ENCODE measurements at regions of chr9 and their contacts with region 1.

Region 1: DNA sequence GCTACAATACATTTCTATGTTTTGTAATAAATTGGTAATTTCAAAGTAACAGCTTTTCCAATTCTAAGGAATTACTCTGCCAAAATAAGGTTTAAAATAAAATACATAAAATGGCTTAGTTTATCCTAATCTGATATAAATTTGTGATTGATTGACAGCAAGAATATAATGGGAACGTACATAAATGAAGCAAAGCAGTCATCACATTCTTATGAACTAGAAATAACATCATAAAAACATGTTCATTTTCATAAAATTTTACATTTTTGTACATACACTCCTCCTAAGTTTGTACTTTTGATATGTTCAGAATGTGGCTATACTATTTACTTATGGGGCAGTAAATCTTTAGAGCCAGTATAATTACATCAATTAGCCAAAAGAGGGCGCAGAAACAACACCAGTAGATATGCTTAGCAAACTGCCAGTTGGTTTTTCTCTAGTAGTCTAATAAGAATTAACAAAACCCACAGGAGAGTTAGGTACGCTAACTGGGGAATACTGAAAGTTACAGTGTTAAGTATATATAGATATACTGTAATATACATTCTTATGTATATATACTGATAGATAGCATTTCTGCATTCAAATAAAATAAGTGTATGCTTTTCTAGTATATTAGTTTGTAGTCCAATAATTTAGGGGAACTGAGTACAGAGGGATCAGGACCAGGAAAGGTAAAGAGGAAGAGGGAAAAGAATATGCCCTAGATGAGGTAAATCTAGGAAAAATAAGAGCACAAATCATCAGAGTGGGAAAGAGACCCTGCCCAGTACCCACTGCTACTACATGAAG is 76.8 kb downstream of the ZDHHC21 start:
- DNase-seq: no peak
- ATAC-seq: no peak
- H3K4me3 ChIP-seq: no peak overlapping the region
- H3K27ac ChIP-seq: no peak overlapping the region
- H3K4me1 ChIP-seq: no peaks in the 10 kb centered on the region
- H3K27me3 ChIP-seq: no peaks in the 10 kb centered on the region

Region 2: GRCh38 chr9:14640967-14641366 is 24.6 kb after region 1 on chr9:
- intact Hi-C with region 1: no loop called
- DNase-seq: no peak
- ATAC-seq: no peak
- H3K4me3 ChIP-seq: no peak overlapping the region
- H3K27ac ChIP-seq: no peak overlapping the region
- H3K4me1 ChIP-seq: no peaks in the 10 kb centered on the region
- H3K27me3 ChIP-seq: no peaks in the 10 kb centered on the region

Region 3: DNA sequence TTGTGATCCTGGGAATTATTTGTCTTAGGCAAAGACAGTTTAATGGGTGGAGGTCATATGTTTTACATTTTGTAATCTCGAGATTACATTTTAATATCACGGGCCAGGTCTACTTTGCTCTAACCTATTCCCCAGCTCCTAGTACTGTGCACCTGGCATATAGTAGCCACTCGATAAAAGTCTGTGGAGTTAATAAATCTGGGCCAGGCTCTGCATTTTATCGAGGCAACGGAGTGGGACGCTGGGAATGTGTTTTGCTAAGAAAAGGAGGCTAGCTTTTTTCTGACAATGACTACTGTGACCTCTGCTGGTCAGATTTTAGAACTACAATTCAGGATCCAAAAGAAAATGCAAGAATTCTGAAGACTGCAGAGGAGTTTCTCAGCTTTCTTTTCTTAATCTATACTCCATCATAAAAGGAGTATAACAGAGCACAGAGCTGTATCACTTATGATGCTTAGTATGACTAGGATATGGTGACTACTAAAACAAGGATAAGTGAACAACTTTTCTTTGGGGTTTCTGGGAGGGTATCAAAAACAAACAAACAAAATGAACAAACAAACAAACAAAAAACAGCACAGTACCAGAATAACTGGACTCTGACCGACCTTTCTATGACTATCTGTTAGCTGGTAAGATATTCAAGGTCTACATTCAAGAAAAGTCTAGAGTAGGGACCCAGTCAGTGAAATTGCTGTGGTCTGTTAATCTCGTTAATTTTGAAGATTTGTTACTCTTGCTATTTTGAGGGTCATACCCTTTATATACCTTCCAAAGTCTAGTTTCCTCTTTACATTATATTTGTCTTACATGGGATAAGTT is 152.2 kb after region 1 on chr9:
- intact Hi-C with region 1: loop called (anchors 5 to 10 kb)
- DNase-seq: no peak
- ATAC-seq: peak; percentile 60
- H3K4me3 ChIP-seq: no peak overlapping the region
- H3K27ac ChIP-seq: no peak overlapping the region
- H3K4me1 ChIP-seq: no peaks in the 10 kb centered on the region
- H3K27me3 ChIP-seq: no peaks in the 10 kb centered on the region

Region 4: GRCh38 chr9:14827805-14828204 is 211.4 kb after region 1 on chr9:
- intact Hi-C with region 1: no loop called
- DNase-seq: no peak
- ATAC-seq: no peak
- H3K4me3 ChIP-seq: no peak overlapping the region
- H3K27ac ChIP-seq: no peak overlapping the region
- H3K4me1 ChIP-seq: no peaks in the 10 kb centered on the region
- H3K27me3 ChIP-seq: no peaks in the 10 kb centered on the region